CD8-positive, alpha-beta memory T cell (primary cell): ENCODE measurements at regions of chr11 and their contacts with region 1.

Region 1: GRCh38 chr11:11787305-11788062 is 54.3 kb upstream of the USP47 start:
- DNase-seq: peak; percentile 49 to 72 (median 54)
- H3K4me3 ChIP-seq: no peak overlapping the region
- H3K4me3 Mint-ChIP-seq: no peak overlapping the region
- H3K27ac ChIP-seq: no peak overlapping the region
- H3K27ac Mint-ChIP-seq: no peak overlapping the region
- H3K4me1 ChIP-seq: no peaks in the 10 kb centered on the region
- H3K4me1 Mint-ChIP-seq: no peaks in the 10 kb centered on the region
- H3K27me3 ChIP-seq: no peaks in the 10 kb centered on the region
- H3K27me3 Mint-ChIP-seq: peaks cover 3 to 25% of the 10 kb centered on the region in 2 donors

Region 2: GRCh38 chr11:10933455-10934292 is 853.8 kb before region 1 on chr11:
- CTCF ChIA-PET with region 1: interaction called, 25 read pairs
- POLR2A ChIA-PET with region 1: no interaction called
- DNase-seq: peak; percentile 56 to 81 (median 65)
- H3K4me3 ChIP-seq: peak overlapping the region; percentile 59
- H3K4me3 Mint-ChIP-seq: peak overlapping the region; percentile 74 to 92 (median 85)
- H3K27ac ChIP-seq: no peak overlapping the region
- H3K27ac Mint-ChIP-seq: peak overlapping the region in 5 of 8 donors; percentile 1 to 52 (median 24)
- H3K4me1 ChIP-seq: peaks cover 5% of the 10 kb centered on the region
- H3K4me1 Mint-ChIP-seq: peaks cover 15 to 22% (median 21%) of the 10 kb centered on the region in 3 donors
- H3K27me3 ChIP-seq: peaks cover 25% of the 10 kb centered on the region
- H3K27me3 Mint-ChIP-seq: peaks cover 18 to 39% of the 10 kb centered on the region in 2 donors

Region 3: DNA sequence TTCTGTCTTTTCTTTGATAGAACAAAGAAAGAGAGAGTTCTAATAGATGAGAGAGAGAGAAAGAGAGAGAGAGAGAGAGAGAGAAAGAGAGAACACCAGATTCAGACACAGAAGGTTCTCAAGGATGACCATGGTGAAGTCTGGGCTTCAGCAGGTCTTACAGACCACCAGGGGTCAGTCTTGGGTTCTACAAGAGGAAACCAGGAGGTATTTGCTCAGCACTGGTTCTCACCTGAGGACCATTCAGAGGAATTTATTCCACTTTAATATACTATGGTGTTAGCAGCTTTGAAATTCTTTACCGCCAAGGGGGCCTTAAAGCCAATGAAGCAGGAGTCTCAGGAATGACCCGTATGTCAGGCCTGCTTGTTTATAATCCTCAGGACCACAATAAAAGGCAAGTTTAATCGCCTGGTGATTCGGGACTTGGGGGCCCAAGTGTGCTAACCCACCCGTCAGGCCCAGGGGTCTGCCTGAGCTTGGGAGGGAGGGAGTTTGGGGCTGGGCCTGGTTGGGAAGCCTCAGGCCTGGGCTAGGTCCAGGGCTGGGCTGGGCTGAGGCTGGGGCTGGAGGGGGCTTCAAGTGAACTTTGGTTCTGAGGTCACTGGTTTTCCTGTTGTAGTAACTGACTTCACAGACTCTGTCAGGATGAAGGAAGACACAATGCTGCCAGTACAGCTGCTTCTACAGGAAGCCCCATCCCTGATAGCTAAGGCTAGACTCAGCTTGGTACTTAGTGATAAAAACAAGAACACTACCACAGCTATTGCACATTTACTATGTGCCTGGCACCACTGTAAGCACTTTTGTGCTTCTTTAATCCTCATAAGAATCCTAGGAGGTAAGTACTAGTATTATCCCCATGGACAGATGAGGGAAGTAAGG is 750.4 kb before region 1 on chr11:
- CTCF ChIA-PET with region 1: interaction called, 21 read pairs
- POLR2A ChIA-PET with region 1: no interaction called
- DNase-seq: peak in 3 of 5 donors; percentile 16 to 55 (median 35)
- H3K4me3 ChIP-seq: no peak overlapping the region
- H3K4me3 Mint-ChIP-seq: no peak overlapping the region
- H3K27ac ChIP-seq: no peak overlapping the region
- H3K27ac Mint-ChIP-seq: peak overlapping the region in 1 of 8 donors; percentile 35
- H3K4me1 ChIP-seq: peaks cover 16% of the 10 kb centered on the region
- H3K4me1 Mint-ChIP-seq: peaks cover 0 to 3% (median 0%) of the 10 kb centered on the region in 3 donors
- H3K27me3 ChIP-seq: no peaks in the 10 kb centered on the region
- H3K27me3 Mint-ChIP-seq: peaks cover 12 to 14% of the 10 kb centered on the region in 2 donors

Region 4: GRCh38 chr11:11558396-11558795 is 229.1 kb before region 1 on chr11:
- CTCF ChIA-PET with region 1: no interaction called
- POLR2A ChIA-PET with region 1: no interaction called
- DNase-seq: no peak
- H3K4me3 ChIP-seq: no peak overlapping the region
- H3K4me3 Mint-ChIP-seq: no peak overlapping the region
- H3K27ac ChIP-seq: no peak overlapping the region
- H3K27ac Mint-ChIP-seq: no peak overlapping the region
- H3K4me1 ChIP-seq: no peaks in the 10 kb centered on the region
- H3K4me1 Mint-ChIP-seq: no peaks in the 10 kb centered on the region
- H3K27me3 ChIP-seq: no peaks in the 10 kb centered on the region
- H3K27me3 Mint-ChIP-seq: peaks cover 7 to 18% of the 10 kb centered on the region in 2 donors